Activated CD8-positive, alpha-beta memory T cell treated with anti-CD3 and anti-CD28 coated beads, Interleukin-2, amount 10 ng/mL, durations not matched to agents 7 days and 5 days (primary cell): ENCODE measurements at regions of chr10 and their contacts with region 1.

Region 1: DNA sequence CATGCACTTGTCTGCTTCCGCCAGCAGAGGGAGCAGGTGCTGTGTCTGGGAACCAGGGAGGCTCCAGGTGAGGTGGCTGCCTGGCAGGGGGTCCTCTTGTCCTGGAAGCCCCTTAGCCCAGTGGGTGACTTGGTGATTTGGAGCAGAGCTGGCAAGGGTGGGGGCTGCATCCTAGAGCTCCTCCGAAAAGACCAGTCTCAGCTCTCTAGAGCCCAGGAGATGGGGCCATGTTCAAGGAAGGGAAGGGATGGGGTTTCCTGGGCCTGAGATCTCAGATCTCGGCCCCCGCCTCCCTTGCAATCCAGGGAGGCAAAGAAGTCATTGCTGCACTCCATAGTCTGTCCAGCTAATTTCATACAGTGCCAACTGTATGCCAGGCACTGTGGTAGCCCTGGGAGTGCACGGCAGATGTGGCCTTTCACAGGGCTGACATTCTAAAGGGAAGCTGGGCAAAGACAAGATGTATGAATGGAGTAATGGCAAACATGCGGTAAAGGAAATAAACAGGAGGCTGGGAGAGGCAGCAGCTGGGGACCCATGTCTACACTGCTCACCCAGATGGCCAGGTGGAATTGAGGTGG is 20.4 kb upstream of the SFRP5 start:
- DNase-seq: peak; percentile 79
- ATAC-seq: peak; percentile 69
- H3K4me3 Mint-ChIP-seq: no peak overlapping the region
- H3K27ac Mint-ChIP-seq: peak overlapping the region; percentile 43
- H3K4me1 Mint-ChIP-seq: peaks cover 26% of the 10 kb centered on the region
- H3K27me3 Mint-ChIP-seq: peaks cover 7% of the 10 kb centered on the region

Region 2: DNA sequence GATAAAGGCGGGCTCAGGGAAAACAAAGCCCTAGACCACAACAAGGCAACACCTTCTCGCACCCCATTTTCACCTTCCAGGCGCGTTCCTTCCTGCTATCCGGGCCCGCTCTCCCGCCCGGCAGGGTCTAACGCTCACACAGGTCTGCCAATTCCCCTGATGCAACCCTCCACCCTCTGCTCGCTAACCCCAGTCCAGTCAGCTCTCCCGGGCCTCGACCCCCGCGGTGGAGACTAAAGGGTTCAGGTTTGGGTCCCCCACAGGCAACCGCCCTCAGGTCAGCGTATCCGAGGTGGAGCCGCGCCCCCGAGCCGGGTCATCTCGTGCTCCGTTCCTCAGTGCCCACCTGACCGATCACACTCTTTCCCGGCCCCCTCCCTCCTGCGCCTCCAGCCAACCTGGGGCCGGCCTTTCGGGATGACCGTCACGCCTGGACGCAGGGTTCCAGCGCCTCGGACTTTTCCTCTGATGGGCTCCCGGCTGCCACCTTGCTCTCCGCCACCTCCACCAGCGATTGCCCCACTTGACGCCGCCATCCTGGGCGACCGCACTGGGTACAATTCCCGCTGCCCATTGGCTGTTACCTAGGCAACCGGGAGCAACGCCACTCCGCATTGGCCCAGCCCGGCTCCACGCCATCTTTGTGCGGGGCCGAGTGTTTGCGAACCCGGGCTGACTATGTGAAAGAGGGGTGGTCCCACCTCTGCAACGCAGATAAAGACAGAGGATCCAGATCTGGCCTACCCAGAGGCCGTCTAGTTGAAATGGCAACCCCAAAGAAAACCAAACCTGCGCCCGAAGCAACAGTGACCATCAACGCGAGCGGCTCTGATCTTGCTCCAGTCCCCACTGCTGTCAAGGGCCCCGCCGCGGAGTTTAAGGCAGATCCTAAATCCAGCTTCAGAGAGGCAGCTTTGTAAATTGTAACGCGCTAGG is 159.0 kb before region 1 on chr10 and contains the start of gene MORN4:
- CTCF ChIA-PET with region 1: no interaction called
- DNase-seq: peak; percentile 93
- ATAC-seq: peak; percentile 99
- H3K4me3 Mint-ChIP-seq: peak within 1 kb of the TSS; percentile 93
- H3K27ac Mint-ChIP-seq: peak within 1 kb of the TSS; percentile 84
- H3K4me1 Mint-ChIP-seq: peaks cover 12% of the 10 kb centered on the region
- H3K27me3 Mint-ChIP-seq: peaks cover 3% of the 10 kb centered on the region
- total RNA-seq, gene MORN4: 1.9 to 2.1 TPM

Region 3: DNA sequence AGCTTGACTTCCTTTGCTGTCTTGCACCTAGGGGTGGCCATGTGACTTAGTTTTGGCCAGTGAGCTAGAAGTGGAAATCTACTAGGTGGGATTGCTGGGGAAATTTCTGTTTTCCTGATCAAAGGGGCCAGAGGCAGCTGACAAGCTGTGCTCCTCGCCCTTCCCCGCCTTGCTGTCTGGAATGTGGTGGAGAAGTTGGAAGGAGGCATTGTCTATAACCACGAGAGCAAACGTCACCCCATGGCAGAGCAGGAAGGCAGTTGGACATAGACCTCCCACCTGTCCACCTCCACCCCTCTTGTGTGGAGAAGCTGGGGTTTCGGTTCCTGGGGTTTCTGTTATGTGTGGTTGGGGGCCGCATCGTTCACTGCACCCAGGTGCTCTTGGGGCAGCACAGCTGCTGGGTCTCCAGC is 27.7 kb before region 1 on chr10:
- CTCF ChIA-PET with region 1: interaction called, 14 read pairs
- DNase-seq: no peak
- ATAC-seq: no peak
- H3K4me3 Mint-ChIP-seq: no peak overlapping the region
- H3K27ac Mint-ChIP-seq: no peak overlapping the region
- H3K4me1 Mint-ChIP-seq: peaks cover 2% of the 10 kb centered on the region
- H3K27me3 Mint-ChIP-seq: peaks cover 4% of the 10 kb centered on the region

Region 4: DNA sequence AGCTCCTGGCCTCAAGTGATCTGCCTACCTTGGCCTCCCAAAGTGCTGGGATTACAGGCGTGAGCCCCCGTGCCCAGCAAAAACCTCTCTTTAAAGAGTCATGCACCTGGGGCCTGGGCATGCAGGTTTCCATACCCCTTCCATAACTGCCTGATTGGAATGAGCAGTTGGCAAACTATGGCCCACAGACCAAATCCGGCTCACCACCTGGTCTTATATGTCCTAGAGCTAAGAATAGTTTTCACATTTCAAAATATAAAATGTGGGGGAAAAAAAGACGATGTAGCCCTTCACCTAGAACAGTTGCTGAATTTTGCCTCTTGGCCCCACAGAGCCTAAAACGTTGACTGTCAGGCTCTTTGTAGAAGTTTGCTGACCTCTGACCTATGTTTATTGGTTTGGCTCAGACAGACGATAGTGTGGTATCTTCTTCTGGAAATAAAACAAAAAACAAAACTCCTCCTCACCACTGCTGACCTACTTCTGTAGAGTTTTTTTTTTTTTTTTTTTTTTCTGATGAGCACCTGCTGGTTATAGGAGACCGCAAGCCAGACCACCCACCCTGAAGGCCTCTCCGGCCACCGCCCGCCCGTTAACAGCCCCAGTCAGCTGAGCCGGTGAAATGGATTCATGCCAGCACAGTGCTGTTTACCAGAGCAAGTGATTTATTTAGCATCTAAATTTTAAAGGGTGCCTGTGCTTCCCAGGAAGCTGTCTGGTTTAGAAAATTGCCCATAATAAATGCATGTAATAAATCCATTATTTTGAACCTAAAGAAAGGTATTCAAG is 13.1 kb after region 1 on chr10:
- CTCF ChIA-PET with region 1: interaction called, 10 read pairs
- DNase-seq: no peak
- ATAC-seq: no peak
- H3K4me3 Mint-ChIP-seq: no peak overlapping the region
- H3K27ac Mint-ChIP-seq: no peak overlapping the region
- H3K4me1 Mint-ChIP-seq: no peaks in the 10 kb centered on the region
- H3K27me3 Mint-ChIP-seq: no peaks in the 10 kb centered on the region

Region 5: DNA sequence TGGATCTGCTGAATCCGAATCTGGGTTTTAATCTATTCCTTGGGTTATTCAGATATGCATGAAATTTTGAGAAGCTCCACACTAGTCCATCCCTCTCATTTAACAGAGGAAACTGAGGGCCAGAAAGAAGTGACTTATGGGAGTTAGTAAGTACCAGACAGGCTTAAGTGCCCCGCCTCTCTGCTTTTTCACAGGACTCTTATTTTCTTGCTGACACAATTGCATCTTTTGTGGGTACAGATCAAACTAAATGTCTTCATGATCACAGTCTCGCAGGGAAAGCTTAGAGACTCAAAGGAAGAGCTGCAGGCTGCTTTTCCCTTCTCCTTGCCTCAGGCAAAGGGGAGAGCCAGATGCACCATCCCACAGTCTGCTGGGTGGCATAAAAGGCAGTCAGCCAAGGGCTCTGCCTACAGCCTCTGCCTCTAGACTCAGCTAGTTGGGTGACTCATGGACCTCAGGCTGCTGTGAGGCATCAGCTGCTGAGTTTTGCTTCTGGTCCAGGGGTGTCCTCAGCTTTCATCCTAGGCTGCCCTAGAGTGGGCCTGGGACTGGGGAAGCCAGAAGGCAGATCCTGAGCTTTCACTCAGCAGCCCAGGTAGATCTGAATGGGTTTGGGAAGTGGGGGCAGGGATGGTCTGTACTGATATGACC is 69.0 kb after region 1 on chr10:
- CTCF ChIA-PET with region 1: interaction called, 288 read pairs
- DNase-seq: no peak
- ATAC-seq: peak; percentile 49
- H3K4me3 Mint-ChIP-seq: no peak overlapping the region
- H3K27ac Mint-ChIP-seq: no peak overlapping the region
- H3K4me1 Mint-ChIP-seq: peaks cover 48% of the 10 kb centered on the region
- H3K27me3 Mint-ChIP-seq: no peaks in the 10 kb centered on the region

Region 6: DNA sequence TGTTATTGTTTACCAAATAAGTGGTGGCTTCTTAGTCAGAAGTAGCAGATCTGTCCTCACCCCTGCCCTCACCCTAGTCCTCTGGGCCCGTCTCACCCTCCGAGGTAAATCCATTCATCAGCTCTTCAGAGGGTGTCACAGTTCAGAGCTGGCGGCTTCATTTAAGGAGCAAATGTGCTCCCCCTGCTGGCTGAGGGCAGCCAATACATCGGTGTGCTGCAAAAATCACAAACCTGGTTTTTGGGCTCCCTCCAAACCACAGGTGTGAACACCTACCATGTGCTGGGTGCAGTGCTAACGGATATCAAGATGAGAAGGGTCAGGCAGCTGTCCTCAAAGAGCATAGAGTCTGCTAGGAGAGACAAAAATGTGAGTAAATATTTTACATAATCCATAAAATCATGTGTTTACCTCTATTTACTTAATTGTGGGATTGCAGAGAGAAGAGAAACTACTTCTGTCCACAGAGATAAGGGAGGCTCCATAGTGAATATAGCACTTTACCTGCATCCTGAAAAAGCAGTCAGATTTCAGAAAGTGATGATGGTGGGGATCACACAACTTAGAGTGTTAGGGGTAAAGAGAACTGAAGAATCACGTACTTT is 253.7 kb after region 1 on chr10:
- CTCF ChIA-PET with region 1: interaction called, 10 read pairs
- DNase-seq: peak; percentile 71
- ATAC-seq: peak; percentile 78
- H3K4me3 Mint-ChIP-seq: no peak overlapping the region
- H3K27ac Mint-ChIP-seq: no peak overlapping the region
- H3K4me1 Mint-ChIP-seq: peaks cover 2% of the 10 kb centered on the region
- H3K27me3 Mint-ChIP-seq: peaks cover 39% of the 10 kb centered on the region